ENCODE measurements at regions of chr7 and their contacts with region 1.

Region 1: GRCh38 chr7:121744319-121744718 is 128.6 kb upstream of the PTPRZ1 start:
- DNase-seq: peak; percentile 62
- H3K4me3 Mint-ChIP-seq: no peak overlapping the region
- H3K27ac Mint-ChIP-seq: peak overlapping the region; percentile 53
- H3K4me1 Mint-ChIP-seq: peaks cover 30% of the 10 kb centered on the region
- H3K27me3 Mint-ChIP-seq: no peaks in the 10 kb centered on the region
- CTCF ChIP-seq: no peak

Region 2: GRCh38 chr7:121797657-121798452 is 53.5 kb after region 1 on chr7:
- CTCF ChIA-PET with region 1: interaction called, 11 read pairs
- POLR2A ChIA-PET with region 1: interaction called, 4 read pairs
- intact Hi-C with region 1: no loop called
- DNase-seq: peak; percentile 35
- H3K4me3 Mint-ChIP-seq: peak overlapping the region; percentile 55
- H3K27ac Mint-ChIP-seq: peak overlapping the region; percentile 87
- H3K4me1 Mint-ChIP-seq: peaks cover 55% of the 10 kb centered on the region
- H3K27me3 Mint-ChIP-seq: no peaks in the 10 kb centered on the region
- CTCF ChIP-seq: no peak

Region 3: DNA sequence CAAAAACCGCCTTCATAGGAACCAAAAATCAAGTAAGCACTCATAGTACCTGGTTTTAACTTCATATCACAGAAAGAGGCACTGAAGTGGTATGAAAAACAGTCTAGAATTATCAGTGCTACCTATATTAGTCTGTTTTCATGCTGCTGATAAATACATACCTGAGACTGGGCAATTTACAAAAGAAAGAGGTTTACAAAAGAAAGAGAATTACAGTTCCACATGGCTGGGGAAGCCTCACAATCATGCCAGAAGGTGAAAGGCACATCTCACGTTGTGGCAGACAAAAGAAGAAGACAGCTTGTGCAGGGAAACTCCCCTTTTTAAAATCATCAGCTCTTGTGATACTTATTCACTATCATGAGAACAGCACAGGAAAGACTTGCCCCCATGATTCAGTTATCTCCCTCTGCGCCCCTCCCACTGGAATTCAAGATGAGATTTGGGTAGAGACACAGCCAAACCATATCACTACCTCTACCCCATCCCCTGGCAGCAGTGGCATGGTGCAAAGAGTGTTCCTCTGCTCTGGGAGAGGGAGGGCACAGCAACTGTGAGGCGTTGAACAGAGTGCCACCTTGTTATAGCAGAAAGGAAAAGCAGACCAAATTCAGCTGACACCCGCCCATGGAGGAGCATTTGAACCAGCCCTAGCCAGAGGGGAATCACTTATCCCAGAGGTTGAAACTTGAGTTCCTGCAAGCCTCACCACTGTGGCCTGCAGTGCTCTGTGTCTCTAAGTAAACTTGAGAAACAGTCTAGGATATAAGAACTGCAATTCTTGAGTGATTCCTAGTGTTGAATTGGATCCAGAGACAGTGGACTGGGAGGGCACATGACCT is 66.7 kb after region 1 on chr7:
- CTCF ChIA-PET with region 1: no interaction called
- POLR2A ChIA-PET with region 1: no interaction called
- intact Hi-C with region 1: no loop called
- DNase-seq: no peak
- H3K4me3 Mint-ChIP-seq: no peak overlapping the region
- H3K27ac Mint-ChIP-seq: no peak overlapping the region
- H3K4me1 Mint-ChIP-seq: no peaks in the 10 kb centered on the region
- H3K27me3 Mint-ChIP-seq: no peaks in the 10 kb centered on the region
- CTCF ChIP-seq: no peak